Activated CD4-positive, alpha-beta T cell treated with anti-CD3 and anti-CD28 coated beads for 36 hours (primary cell): ENCODE measurements at regions of chr12 and their contacts with region 1.

Region 1: GRCh38 chr12:49264738-49265515 is at the start of gene TUBA1C:
- DNase-seq: peak; percentile 95
- ATAC-seq: peak; percentile 90
- H3K4me3 Mint-ChIP-seq: peak within 1 kb of the TSS; percentile 93
- H3K27ac Mint-ChIP-seq: peak within 1 kb of the TSS; percentile 96
- H3K4me1 Mint-ChIP-seq: peaks cover 47% of the 10 kb centered on the region
- H3K27me3 Mint-ChIP-seq: no peaks in the 10 kb centered on the region
- total RNA-seq, gene TUBA1C: 276 to 338 TPM

Region 2: DNA sequence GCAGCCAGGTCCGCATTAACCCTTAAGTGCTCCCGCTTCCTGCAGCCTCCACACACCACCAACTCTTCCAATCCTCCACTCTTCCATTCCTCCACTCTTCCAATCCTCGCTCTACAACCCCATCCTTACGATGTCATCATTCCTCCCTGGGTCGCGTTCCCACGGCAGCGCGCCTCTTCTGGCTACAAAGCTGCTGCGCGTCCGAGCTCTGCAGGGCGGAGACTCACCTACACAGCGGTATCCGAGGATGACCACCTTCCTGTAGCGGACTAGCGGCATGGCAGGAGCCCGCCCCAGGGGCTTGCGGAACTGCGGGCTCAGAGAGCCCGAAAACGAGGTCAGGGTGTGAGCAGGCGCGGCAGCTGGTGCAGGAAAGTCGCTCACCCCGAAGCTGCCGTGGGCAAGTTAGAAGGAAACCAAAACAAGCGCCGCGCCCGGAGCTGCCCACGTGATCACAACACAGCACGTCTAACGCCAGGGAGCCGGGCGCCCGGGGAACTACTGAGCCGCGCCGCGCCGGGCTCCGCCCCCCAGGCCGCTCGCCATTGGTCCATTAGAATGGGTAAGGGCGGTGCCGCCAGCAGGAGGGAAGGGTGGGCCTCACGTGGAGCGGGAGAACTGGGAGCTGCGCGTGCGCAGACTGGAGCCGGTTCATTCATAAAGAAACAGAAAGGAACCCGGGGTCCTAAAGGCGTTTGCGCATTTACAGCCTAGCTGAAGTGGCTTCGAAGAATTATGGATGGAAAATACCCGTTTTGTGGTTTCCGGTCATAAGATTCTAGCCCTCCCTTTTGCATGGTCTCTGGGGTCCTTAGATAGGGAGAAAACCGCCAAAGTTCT is 195.2 kb before region 1 on chr12 and contains the start of gene RHEBL1:
- CTCF ChIA-PET with region 1: no interaction called
- POLR2A ChIA-PET with region 1: interaction called, 5 read pairs
- intact Hi-C with region 1: loop called (anchors 1 kb)
- DNase-seq: peak; percentile 100
- ATAC-seq: peak; percentile 100
- H3K4me3 Mint-ChIP-seq: peak within 1 kb of the TSS; percentile 94
- H3K27ac Mint-ChIP-seq: peak within 1 kb of the TSS; percentile 91
- H3K4me1 Mint-ChIP-seq: peaks cover 15% of the 10 kb centered on the region
- H3K27me3 Mint-ChIP-seq: no peaks in the 10 kb centered on the region
- total RNA-seq, gene RHEBL1: 6.7 to 13.3 TPM

Region 3: DNA sequence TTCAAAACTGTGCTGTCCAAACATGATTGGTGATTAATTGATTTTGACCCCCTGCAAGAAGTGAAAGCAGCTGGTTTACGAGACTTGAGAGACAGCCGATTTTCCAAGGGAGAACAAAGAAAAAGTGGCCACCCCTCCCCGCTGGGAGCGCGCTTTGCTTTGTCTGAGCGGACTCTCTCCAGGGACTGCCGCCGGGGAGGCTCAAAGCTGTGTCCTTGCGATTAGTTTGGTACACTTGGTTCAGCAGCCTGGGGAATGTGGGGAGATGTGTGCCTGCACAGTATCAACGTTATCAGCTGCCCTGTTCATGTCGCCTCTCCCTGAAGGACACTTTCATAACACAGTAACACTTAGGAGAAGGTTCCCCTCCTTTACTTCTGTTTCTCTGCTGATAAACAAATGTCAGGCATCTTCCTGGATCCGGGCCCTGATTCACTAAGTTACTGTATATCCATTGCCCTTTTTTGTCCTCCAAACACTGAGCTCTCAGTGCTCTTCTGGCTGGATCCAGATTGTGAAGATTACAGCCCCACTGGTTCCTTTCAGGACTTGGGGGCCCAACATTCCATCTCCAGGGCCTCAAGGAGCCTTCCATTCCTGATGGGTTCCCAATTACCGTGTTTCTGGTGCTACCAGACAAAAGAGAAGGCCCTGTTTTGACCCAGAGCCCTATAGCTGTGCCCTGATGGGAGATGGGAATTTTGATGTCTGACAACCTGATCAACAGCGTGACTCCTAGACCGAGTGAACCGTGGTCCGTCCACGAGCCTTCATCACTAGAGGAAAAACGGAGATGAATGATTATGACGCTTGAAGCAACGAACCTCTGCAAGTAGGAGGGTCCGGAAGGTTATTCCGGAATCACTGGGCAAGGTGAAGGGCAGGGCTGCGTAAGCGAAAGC is 31.7 kb before region 1 on chr12:
- CTCF ChIA-PET with region 1: interaction called, 4 read pairs
- POLR2A ChIA-PET with region 1: no interaction called
- intact Hi-C with region 1: loop called (anchors 1 kb)
- DNase-seq: no peak
- ATAC-seq: no peak
- H3K4me3 Mint-ChIP-seq: peak overlapping the region; percentile 76
- H3K27ac Mint-ChIP-seq: peak overlapping the region; percentile 83
- H3K4me1 Mint-ChIP-seq: peaks cover 20% of the 10 kb centered on the region
- H3K27me3 Mint-ChIP-seq: no peaks in the 10 kb centered on the region

Region 4: GRCh38 chr12:49288412-49288853 is 23.5 kb after region 1 on chr12:
- CTCF ChIA-PET with region 1: interaction called, 7 read pairs
- POLR2A ChIA-PET with region 1: interaction called, 11 read pairs
- intact Hi-C with region 1: no loop called
- DNase-seq: peak; percentile 81
- ATAC-seq: peak; percentile 80
- H3K4me3 Mint-ChIP-seq: no peak overlapping the region
- H3K27ac Mint-ChIP-seq: no peak overlapping the region
- H3K4me1 Mint-ChIP-seq: no peaks in the 10 kb centered on the region
- H3K27me3 Mint-ChIP-seq: peaks cover 22% of the 10 kb centered on the region

Region 5: GRCh38 chr12:49366652-49367380 is 101.9 kb after region 1 on chr12:
- CTCF ChIA-PET with region 1: interaction called, 4 read pairs
- POLR2A ChIA-PET with region 1: no interaction called
- intact Hi-C with region 1: loop called in 1 of 2 experiments (anchors 1 kb)
- DNase-seq: peak; percentile 94
- ATAC-seq: peak; percentile 86
- H3K4me3 Mint-ChIP-seq: peak overlapping the region; percentile 97
- H3K27ac Mint-ChIP-seq: peak overlapping the region; percentile 99
- H3K4me1 Mint-ChIP-seq: peaks cover 25% of the 10 kb centered on the region
- H3K27me3 Mint-ChIP-seq: no peaks in the 10 kb centered on the region

Region 6: GRCh38 chr12:49740930-49741881 is 476.3 kb after region 1 on chr12 and contains the start of gene TMBIM6:
- CTCF ChIA-PET with region 1: interaction called, 3 read pairs
- POLR2A ChIA-PET with region 1: no interaction called
- intact Hi-C with region 1: loop called (anchors 1 to 10 kb)
- DNase-seq: peak; percentile 99
- ATAC-seq: peak; percentile 93
- H3K4me3 Mint-ChIP-seq: peak within 1 kb of the TSS; percentile 89
- H3K27ac Mint-ChIP-seq: peak within 1 kb of the TSS; percentile 100
- H3K4me1 Mint-ChIP-seq: peaks cover 45% of the 10 kb centered on the region
- H3K27me3 Mint-ChIP-seq: no peaks in the 10 kb centered on the region
- total RNA-seq, gene TMBIM6: 378 to 450 TPM